ENCODE measurements at regions of chr4 and their contacts with region 1.

Region 1: GRCh38 chr4:112636688-112637551 is at the starts of genes LARP7 and ZGRF1:
- DNase-seq: peak; percentile 96 to 98
- H3K4me3 ChIP-seq: peak within 1 kb of the TSS; percentile 78
- H3K4me3 Mint-ChIP-seq: no peak within 1 kb of the TSS
- H3K27ac Mint-ChIP-seq: no peak within 1 kb of the TSS
- H3K4me1 ChIP-seq: peaks cover 7% of the 10 kb centered on the region; the same call in 1 of the 2 replicates
- H3K4me1 Mint-ChIP-seq: no peaks in the 10 kb centered on the region
- H3K27me3 ChIP-seq: no peaks in the 10 kb centered on the region
- H3K27me3 Mint-ChIP-seq: no peaks in the 10 kb centered on the region
- CTCF ChIP-seq: peak; percentile 59 to 65
- total RNA-seq, gene LARP7: 35.7 and 38.0 TPM in 2 replicates
- total RNA-seq, gene ZGRF1: 14.7 and 15.7 TPM in 2 replicates

Region 2: DNA sequence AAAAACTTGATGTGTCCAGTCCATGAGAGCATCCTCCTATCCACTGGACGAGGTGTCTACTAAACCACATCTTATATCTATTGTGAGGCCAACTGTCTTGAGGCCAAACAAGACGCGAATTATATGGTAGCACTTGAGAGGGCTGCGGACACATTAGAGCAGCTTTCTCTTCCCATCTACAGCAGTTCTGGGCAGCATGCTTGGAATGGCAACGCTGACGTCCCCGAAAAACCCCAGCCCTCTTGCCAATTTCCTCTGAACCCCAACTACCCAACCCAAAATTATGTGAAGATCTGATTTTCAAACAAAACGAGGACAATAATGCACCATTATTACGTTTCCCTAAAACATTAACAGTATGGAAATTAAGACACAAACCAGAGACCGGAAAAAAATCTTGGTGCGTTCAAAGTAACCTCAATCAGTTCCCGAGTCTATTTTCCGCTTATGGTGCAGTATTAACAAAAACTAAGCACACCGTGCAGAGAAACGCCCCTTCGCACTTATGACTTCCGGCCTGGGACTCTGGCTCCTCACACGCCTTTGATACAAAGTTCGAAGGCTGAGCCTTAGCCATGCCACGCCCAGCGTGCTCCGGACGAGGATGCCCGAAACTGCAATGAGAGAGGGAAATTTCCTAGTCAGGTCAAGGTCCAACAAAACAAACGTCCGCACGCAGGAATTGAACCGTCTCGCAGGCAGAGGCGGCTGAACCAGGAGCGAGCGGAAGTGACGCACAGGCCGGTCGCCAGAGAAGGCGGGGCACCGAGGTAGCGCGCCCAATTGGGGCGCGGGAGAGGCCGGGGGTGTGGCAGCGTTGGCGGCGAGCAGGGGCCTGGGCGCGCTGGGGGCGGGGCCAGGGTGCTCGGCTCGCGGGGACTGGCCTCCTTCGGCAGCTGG is 405.8 kb before region 1 on chr4:
- CTCF ChIA-PET with region 1: no interaction called
- POLR2A ChIA-PET with region 1: no interaction called
- intact Hi-C with region 1: no loop called
- DNase-seq: peak; percentile 98 to 99
- H3K4me3 ChIP-seq: peak overlapping the region; percentile 96
- H3K4me3 Mint-ChIP-seq: peak overlapping the region; percentile 96
- H3K27ac Mint-ChIP-seq: peak overlapping the region; percentile 96
- H3K4me1 ChIP-seq: peaks cover 12% of the 10 kb centered on the region; the same call in 1 of the 2 replicates
- H3K4me1 Mint-ChIP-seq: peaks cover 11% of the 10 kb centered on the region
- H3K27me3 ChIP-seq: no peaks in the 10 kb centered on the region
- H3K27me3 Mint-ChIP-seq: no peaks in the 10 kb centered on the region
- CTCF ChIP-seq: no peak

Region 3: DNA sequence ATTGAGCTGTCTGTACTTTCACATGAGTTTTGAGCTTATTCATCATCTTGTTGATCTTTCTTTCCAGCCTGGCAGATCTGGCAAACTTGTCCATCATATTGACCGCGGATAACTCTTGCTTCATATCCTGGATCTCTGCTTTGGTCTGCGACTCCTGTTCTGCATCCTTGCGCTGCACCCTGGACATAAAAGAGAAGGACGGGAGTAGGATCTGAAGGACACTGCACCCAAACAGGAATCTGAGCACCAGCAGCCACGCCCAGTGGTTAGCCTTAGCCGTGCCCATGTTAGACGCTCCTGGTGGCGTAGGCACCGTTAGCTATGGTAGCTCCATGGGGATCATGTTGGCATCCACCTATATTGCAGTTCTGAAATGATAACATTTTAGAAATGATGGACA is 56.6 kb after region 1 on chr4:
- CTCF ChIA-PET with region 1: no interaction called
- POLR2A ChIA-PET with region 1: no interaction called
- intact Hi-C with region 1: no loop called
- DNase-seq: no peak
- H3K4me3 ChIP-seq: no peak overlapping the region
- H3K4me3 Mint-ChIP-seq: no peak overlapping the region
- H3K27ac Mint-ChIP-seq: no peak overlapping the region
- H3K4me1 ChIP-seq: no peaks in the 10 kb centered on the region
- H3K4me1 Mint-ChIP-seq: no peaks in the 10 kb centered on the region
- H3K27me3 ChIP-seq: no peaks in the 10 kb centered on the region
- H3K27me3 Mint-ChIP-seq: peaks cover 5% of the 10 kb centered on the region
- CTCF ChIP-seq: no peak

Region 4: DNA sequence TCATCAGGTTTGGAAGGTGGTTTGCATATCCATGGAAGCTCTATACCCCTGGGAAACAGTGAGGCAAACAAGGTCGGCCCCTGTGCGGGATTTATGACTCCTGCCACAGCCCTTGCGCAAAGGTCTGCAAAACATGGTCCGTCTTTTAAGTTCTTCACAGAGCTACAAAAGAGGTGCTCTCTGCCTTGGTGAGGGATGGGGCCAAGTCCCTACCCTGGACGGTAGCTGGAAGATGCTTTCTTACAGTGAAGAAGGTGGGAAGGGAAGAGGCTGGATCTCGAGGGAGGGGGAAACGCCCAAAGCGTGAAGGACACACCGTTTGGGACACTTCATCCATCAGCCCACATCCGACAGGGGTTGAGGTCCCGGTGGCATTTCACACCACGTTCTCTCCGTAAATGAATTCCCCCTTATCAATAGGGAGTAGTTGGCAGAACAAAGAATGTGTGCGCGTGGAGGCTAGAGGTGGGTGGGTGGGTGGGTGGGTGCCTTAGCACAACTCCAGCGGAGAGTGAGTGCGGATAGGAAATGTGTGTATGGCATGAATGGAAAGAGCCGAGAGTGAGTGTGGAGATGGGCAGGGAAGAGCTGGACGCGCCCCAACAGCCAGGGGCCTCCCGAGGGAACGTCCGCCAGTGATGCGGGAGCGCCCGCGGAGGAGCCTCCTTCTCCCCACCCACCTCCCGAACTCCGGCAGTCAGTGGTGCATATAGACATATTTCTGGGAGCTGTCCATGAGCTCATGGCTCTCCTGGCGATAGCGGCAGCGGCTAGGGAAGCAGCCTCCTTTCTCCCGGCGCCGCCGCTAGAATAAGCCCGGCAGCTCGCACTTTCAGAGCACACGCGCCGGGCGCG is 68.3 kb after region 1 on chr4:
- CTCF ChIA-PET with region 1: no interaction called
- POLR2A ChIA-PET with region 1: no interaction called
- intact Hi-C with region 1: loop called (anchors 2 kb)
- DNase-seq: peak; percentile 55 to 57
- H3K4me3 ChIP-seq: peak overlapping the region; percentile 17
- H3K4me3 Mint-ChIP-seq: peak overlapping the region; percentile 66
- H3K27ac Mint-ChIP-seq: no peak overlapping the region
- H3K4me1 ChIP-seq: no peaks in the 10 kb centered on the region
- H3K4me1 Mint-ChIP-seq: peaks cover 12% of the 10 kb centered on the region
- H3K27me3 ChIP-seq: peaks cover 2% of the 10 kb centered on the region; the same call in 1 of the 2 replicates
- H3K27me3 Mint-ChIP-seq: peaks cover 27% of the 10 kb centered on the region
- CTCF ChIP-seq: no peak

Region 5: GRCh38 chr4:112747036-112747435 is 110.1 kb after region 1 on chr4:
- CTCF ChIA-PET with region 1: no interaction called
- POLR2A ChIA-PET with region 1: no interaction called
- intact Hi-C with region 1: loop called (anchors 5 kb)
- DNase-seq: no peak
- H3K4me3 ChIP-seq: no peak overlapping the region
- H3K4me3 Mint-ChIP-seq: no peak overlapping the region
- H3K27ac Mint-ChIP-seq: peak overlapping the region; percentile 62
- H3K4me1 ChIP-seq: peaks cover 42% of the 10 kb centered on the region
- H3K4me1 Mint-ChIP-seq: peaks cover 18% of the 10 kb centered on the region
- H3K27me3 ChIP-seq: no peaks in the 10 kb centered on the region
- H3K27me3 Mint-ChIP-seq: no peaks in the 10 kb centered on the region
- CTCF ChIP-seq: no peak

Region 6: GRCh38 chr4:112765317-112765975 is 128.5 kb after region 1 on chr4:
- CTCF ChIA-PET with region 1: interaction called, 4 read pairs
- POLR2A ChIA-PET with region 1: no interaction called
- intact Hi-C with region 1: loop called (anchors 1 kb)
- DNase-seq: peak in 1 of 2 experiments; percentile 33
- H3K4me3 ChIP-seq: no peak overlapping the region
- H3K4me3 Mint-ChIP-seq: no peak overlapping the region
- H3K27ac Mint-ChIP-seq: no peak overlapping the region
- H3K4me1 ChIP-seq: 0 out of 2 replicates have a peak, but pooled peaks cover 3% of the 10 kb centered on the region
- H3K4me1 Mint-ChIP-seq: peaks cover 10% of the 10 kb centered on the region
- H3K27me3 ChIP-seq: no peaks in the 10 kb centered on the region
- H3K27me3 Mint-ChIP-seq: no peaks in the 10 kb centered on the region
- CTCF ChIP-seq: peak; percentile 39 to 45

Region 7: GRCh38 chr4:112938461-112939058 is 301.6 kb after region 1 on chr4:
- CTCF ChIA-PET with region 1: no interaction called
- POLR2A ChIA-PET with region 1: no interaction called
- intact Hi-C with region 1: loop called (anchors 1 kb)
- DNase-seq: peak in 1 of 2 experiments; percentile 31
- H3K4me3 ChIP-seq: no peak overlapping the region
- H3K4me3 Mint-ChIP-seq: no peak overlapping the region
- H3K27ac Mint-ChIP-seq: no peak overlapping the region
- H3K4me1 ChIP-seq: peaks cover 10% of the 10 kb centered on the region
- H3K4me1 Mint-ChIP-seq: no peaks in the 10 kb centered on the region
- H3K27me3 ChIP-seq: no peaks in the 10 kb centered on the region
- H3K27me3 Mint-ChIP-seq: no peaks in the 10 kb centered on the region
- CTCF ChIP-seq: peak; percentile 59 to 67